Naive thymus-derived CD8-positive, alpha-beta T cell (primary cell): ENCODE measurements at regions of chr9 and their contacts with region 1.

Region 1: DNA sequence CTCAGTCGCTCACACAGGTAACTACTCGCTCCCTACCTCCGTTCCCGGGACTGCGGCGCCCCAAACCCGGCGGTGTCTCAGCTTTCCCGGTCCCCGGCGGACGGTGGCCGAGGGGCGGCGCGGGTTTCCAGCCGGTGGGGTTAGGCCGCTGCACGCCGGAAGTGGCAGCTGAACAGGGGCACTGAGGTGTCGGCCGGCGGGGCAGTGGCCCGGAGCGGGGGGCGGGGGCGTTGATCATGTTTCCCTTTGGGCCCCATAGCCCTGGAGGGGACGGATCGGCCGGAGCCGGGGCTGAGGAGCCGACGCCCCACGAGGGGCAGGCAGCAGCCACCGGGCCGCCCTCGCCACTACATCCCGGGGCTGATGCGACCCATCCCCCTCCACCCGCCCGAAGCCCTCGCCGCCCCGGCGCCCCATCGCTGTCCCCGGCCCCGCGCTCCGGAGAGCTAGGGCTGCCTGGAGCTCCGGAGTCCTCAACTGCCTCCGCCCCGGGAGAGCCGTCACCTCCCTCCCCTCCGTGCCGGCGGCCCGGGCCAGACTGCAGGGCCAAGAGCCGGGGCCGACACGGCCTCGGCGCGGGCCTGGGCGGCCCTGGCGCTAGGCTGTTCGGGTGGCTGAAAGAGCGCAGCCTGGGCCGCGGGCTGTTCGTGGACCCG is at the start of gene DCAF10:
- DNase-seq: peak; percentile 76 to 95 (median 88)
- ATAC-seq: peak; percentile 83
- H3K4me3 Mint-ChIP-seq: peak within 1 kb of the TSS; percentile 87 to 96 (median 91)
- H3K27ac Mint-ChIP-seq: peak within 1 kb of the TSS; percentile 78 to 96 (median 89)
- H3K4me1 Mint-ChIP-seq: peaks cover 12 to 43% (median 39%) of the 10 kb centered on the region in 4 donors
- H3K27me3 Mint-ChIP-seq: no peaks in the 10 kb centered on the region
- polyA plus RNA-seq, gene DCAF10: 27.3 to 35.0 (median 28.5) TPM

Region 2: GRCh38 chr9:37784616-37785483 is 15.9 kb before region 1 on chr9 and contains the start of gene EXOSC3:
- POLR2A ChIA-PET with region 1: interaction called, 58 read pairs
- DNase-seq: peak; percentile 71 to 90 (median 82)
- ATAC-seq: peak; percentile 94 to 95
- H3K4me3 Mint-ChIP-seq: peak within 1 kb of the TSS; percentile 95 to 99 (median 97)
- H3K27ac Mint-ChIP-seq: peak within 1 kb of the TSS; percentile 92 to 99 (median 96)
- H3K4me1 Mint-ChIP-seq: peaks cover 18 to 46% (median 39%) of the 10 kb centered on the region in 4 donors
- H3K27me3 Mint-ChIP-seq: peaks cover 0 to 3% (median 0%) of the 10 kb centered on the region in 5 donors
- polyA plus RNA-seq, gene EXOSC3: 16.4 to 36.0 (median 24.9) TPM

Region 3: DNA sequence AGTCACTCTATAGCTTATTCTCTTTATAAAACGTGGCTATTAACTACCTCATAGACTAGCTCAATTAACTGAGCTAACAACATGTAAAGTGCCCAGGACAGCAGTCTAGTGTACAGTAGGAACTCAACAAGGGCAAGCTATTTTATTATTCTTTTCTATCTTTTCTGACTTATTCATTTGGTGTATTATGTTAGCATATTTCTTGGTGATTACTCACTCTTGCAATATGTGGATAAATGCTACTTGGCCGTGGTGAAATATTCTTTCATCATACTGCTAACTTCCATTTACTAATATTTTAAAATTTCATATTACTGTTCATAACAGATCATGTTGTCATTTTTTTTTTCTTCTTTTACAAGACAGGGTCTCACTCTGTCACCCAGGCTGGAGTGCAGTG is 98.3 kb after region 1 on chr9:
- POLR2A ChIA-PET with region 1: no interaction called
- DNase-seq: no peak
- ATAC-seq: no peak
- H3K4me3 Mint-ChIP-seq: no peak overlapping the region
- H3K27ac Mint-ChIP-seq: no peak overlapping the region
- H3K4me1 Mint-ChIP-seq: peaks cover 9 to 22% (median 17%) of the 10 kb centered on the region in 4 donors
- H3K27me3 Mint-ChIP-seq: no peaks in the 10 kb centered on the region

Region 4: GRCh38 chr9:37938121-37938891 is 137.5 kb after region 1 on chr9:
- POLR2A ChIA-PET with region 1: no interaction called
- DNase-seq: no peak
- ATAC-seq: no peak
- H3K4me3 Mint-ChIP-seq: no peak overlapping the region
- H3K27ac Mint-ChIP-seq: no peak overlapping the region
- H3K4me1 Mint-ChIP-seq: no peaks in the 10 kb centered on the region
- H3K27me3 Mint-ChIP-seq: no peaks in the 10 kb centered on the region